Activated T-helper 2 cell treated with anti-CD3 and anti-CD28 coated beads, Interferon-gamma antibody, Interleukin-2, Interleukin-4, amounts not matched to agents 10 μg/mL and 5 μg/mL and 100 μg/mL, durations not matched to agents 14 hours and 24 hours and 36 hours (primary cell): ENCODE measurements at regions of chr22 and their contacts with region 1.

Region 1: DNA sequence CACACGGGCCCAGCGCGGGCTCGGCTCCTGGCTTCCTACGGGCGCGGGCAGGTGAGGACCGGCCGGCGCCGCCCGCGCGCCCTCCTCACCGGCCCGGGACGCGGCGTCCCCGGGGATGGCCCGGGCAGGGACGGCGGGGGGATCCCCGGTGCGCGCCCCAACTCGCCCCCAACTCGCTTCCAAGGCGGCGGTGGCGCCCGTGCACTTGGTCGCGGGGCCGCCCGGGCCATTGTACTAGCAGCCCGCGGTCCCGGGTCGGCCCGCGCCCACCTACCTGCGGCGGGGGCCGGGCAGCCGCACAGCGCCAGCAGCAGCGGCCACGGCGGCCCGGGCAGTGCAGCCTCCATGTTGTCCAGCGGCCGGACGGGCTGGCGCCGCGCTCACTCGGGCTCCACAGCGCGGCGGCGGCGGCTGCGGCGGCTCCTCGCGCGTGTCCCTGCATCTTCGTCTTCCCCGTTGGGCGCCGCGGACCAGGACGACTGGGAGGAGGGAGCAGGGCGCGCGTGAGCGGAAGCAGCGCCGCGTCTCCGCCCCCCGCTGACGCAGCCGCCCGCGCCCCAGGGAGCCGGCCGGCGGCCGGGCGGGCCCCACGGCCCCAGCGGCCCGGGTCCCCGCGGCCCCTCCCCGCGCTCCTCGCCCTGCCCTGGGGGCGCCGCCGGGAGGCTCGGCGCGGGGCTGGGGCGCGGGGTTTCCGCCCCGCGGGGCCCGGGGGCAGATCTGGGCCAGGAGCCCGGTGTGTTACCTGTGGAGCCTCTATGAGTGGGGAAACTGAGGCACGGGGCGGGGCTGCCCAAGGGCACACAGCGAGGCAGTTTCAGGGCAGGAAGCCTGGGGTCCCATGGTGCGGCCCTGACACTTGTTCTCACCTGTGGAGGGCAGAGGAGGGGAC is 159.3 kb upstream of the GRK3 start:
- DNase-seq: peak; percentile 68
- H3K4me3 Mint-ChIP-seq: peak overlapping the region; percentile 85
- H3K27ac Mint-ChIP-seq: peak overlapping the region; percentile 46
- H3K4me1 Mint-ChIP-seq: peaks cover 31% of the 10 kb centered on the region
- H3K27me3 Mint-ChIP-seq: no peaks in the 10 kb centered on the region

Region 2: DNA sequence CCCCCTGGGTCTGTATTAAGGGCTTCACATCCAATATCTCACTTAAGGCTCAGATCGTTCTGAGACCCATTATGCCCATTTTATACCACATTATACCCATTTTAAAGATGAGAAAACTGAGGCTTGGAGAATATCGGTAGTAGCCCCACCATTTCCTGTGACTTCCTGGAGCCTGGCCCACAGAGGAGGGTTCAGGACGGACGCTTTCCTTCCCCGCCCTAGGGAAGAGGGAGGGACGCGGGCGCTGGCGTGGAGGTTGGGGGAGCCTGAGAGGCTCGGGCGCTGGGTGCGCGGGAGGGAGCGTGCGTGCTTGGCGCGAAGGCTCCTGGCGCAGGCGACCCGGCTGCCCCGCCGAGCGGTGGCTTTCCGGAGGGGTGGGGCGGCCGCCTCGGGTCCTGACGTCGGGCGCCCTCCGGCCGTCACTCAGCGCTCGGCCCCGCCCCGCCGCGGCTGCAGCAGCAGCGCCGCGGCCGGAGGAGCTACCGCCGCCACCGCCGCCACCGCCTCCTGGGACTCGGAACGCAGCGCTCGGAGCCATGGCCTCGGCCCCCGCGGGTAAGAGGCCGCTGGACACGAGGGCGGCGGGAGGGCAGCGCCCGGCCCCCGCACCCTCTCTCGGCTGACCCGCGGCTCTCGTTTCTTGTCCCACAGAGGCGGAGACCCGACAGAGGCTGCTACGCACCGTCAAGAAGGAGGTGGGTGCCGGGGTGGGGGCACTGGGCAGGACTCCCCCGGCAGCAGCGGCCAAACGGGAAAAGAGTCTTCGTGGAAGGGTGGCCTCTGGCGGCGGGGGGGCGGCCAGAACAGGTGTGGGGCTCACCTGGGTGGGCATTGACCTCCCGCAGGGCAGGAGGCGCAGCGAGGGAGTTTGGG is 599.1 kb before region 1 on chr22 and contains the start of gene SGSM1:
- intact Hi-C with region 1: loop called (anchors 10 kb)
- DNase-seq: peak; percentile 71
- H3K4me3 Mint-ChIP-seq: peak within 1 kb of the TSS; percentile 70
- H3K27ac Mint-ChIP-seq: no peak within 1 kb of the TSS
- H3K4me1 Mint-ChIP-seq: peaks cover 38% of the 10 kb centered on the region
- H3K27me3 Mint-ChIP-seq: peaks cover 21% of the 10 kb centered on the region
- total RNA-seq, gene SGSM1: 0.07 TPM in 1 of 2 replicates, not detected in the other

Region 3: DNA sequence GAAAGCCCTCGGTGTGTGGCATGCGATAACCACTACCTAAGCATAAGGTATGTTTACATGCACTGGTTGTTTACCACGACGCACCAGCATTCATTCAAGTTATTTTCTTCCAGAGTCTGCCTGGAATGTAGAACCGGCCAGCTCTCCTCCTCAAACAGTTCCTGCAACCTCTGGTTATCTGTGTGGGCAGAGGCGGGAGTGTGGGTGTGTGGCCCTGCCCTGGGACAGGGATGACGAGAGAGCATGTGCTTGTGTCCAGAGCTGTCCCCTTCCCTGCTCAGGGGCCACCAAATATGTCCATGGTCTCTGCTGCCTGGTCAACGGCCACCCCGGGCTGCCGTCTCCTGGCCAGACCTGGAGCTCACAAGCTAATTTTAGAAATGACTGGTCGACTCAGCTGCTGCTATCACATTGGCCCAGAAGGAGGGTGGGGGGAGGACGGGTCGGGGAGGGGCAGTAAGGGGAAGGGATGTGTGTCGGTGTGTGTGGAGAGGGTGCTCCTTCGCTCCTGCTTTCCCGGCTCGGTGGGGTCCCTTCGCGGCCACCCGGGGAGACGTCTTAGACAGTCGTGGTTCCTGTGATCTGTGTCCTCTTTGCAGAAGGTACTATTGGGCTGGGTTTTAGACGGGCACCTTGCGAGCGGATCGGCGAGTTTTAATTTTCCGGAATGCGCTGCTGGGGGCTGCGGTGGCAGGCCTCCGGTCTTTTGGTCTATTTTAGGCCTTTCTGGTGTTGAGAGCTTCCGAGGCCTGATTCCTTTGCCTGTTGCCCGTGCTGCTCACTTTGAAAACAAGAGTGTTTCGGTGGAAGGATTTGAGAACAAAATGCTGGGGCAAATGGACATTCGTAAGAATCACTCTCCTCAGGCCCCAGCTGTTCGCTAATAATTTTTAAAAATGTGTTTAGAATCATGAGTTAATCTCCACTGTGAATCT is 336.8 kb after region 1 on chr22 and contains the start of gene MYO18B:
- intact Hi-C with region 1: no loop called
- DNase-seq: no peak
- H3K4me3 Mint-ChIP-seq: no peak within 1 kb of the TSS
- H3K27ac Mint-ChIP-seq: peak within 1 kb of the TSS; percentile 91
- H3K4me1 Mint-ChIP-seq: peaks cover 66% of the 10 kb centered on the region
- H3K27me3 Mint-ChIP-seq: no peaks in the 10 kb centered on the region
- total RNA-seq, gene MYO18B: 6.0 and 6.1 TPM in 2 replicates